Mucosa of descending colon (tissue), 3 donors: ENCODE measurements at regions of chr18 and their contacts with region 1.

Region 1: DNA sequence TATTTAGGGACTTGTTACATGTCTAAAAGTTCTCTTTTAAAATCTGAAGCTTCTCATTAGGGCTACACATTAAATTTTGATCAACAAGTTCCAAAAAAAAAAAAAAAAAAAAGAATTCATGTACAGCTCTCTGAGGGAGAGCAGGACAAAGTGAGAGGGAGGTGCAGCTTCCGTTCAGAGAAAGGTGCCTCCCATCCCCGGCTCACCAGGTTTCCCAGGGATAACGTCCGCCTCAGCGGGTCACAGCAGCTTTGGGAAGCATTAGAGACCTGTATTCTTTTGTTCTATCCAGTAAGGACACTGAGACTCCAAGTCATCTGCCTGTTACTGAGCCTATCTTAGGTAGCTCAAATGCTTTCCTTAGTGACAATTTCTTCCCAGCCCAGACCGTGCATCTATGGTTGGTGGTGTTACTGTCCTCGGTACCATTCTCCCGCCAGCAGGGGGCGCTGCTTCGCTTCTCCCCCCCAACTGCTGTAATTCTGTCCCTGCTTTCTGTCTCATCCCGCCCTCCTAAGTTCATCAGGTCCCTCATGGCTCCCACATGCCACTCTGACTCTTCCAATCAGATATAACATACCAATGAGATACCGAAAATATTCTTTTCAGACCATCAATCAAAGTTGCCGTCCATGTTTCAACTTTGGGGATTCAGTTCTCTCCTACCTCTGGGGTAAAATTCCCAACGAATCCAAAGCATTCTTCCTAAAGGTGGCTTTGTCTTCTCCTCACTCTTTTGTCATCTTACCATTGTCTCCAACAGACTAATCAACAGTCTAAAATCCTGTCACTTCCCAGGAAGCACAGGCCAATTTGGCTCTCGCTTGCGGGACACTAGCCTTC is 466.5 kb downstream of the METTL4 start:
- DNase-seq: peak; percentile 48 to 67 (median 56)
- ATAC-seq: peak; percentile 85
- H3K4me3 ChIP-seq: no peak overlapping the region
- H3K4me1 ChIP-seq: no peaks in the 10 kb centered on the region
- CTCF ChIP-seq: peak; percentile 33

Region 2: GRCh38 chr18:1895456-1896185 is 209.2 kb before region 1 on chr18:
- intact Hi-C with region 1: no loop called
- DNase-seq: no peak
- ATAC-seq: no peak
- H3K4me3 ChIP-seq: no peak overlapping the region
- H3K4me1 ChIP-seq: no peaks in the 10 kb centered on the region
- CTCF ChIP-seq: no peak

Region 3: GRCh38 chr18:2027026-2027425 is 77.8 kb before region 1 on chr18:
- intact Hi-C with region 1: loop called in 1 of 2 experiments (anchors 10 kb)
- DNase-seq: no peak
- ATAC-seq: no peak
- H3K4me3 ChIP-seq: no peak overlapping the region
- H3K4me1 ChIP-seq: no peaks in the 10 kb centered on the region
- CTCF ChIP-seq: no peak

Region 4: DNA sequence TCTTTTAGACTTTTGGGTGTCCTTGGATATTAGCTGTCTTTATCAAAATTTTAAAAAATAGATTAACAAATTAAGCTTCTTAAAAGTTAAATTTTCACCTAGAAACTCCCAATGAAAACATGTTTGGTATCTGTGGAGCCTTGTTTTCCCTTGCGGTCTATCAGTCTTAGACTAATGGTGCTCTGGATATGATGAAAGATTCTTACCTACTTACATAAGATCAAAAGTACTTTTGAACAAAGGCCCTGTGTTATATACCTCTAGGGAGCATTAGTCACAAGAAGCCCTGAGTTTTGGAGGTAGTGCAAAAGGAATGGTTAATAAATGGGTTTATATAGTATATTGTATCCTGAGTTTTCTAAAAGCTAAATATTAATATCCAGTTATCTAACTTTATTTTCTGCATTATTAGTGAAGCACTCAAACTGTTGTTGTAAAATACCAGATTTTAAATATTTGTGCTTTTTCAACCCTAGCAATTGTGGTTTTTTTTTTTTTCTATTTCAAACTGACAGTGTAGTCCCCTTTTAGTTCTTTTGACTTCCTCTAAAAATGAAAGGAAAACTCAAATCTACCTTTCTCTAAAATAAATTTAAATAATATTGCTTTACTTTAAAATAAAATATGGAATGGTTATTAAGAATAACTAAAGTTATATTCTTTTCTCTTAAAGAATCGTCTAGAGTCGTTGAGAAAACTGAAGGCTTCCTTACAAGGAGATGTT is 484.7 kb after region 1 on chr18:
- intact Hi-C with region 1: no loop called
- DNase-seq: no peak
- ATAC-seq: no peak
- H3K4me3 ChIP-seq: no peak overlapping the region
- H3K4me1 ChIP-seq: no peaks in the 10 kb centered on the region
- CTCF ChIP-seq: no peak